GM12878 (cell line): ENCODE measurements at regions of chr20 and their contacts with region 1.

Region 1: GRCh38 chr20:2172305-2173175 is 70.9 kb downstream of the STK35 start:
- DNase-seq: peak; percentile 1
- ATAC-seq: peak; percentile 86
- H3K4me3 ChIP-seq: no peak overlapping the region
- H3K27ac ChIP-seq: no peak overlapping the region
- H3K4me1 ChIP-seq: no peaks in the 10 kb centered on the region
- H3K27me3 ChIP-seq: no peaks in the 10 kb centered on the region
- CTCF ChIP-seq: peak; percentile 88 to 93 (median 92)
- EP300 ChIP-seq: no peak
- POLR2A ChIP-seq: no peak
- RAD21 ChIP-seq: peak; percentile 93

Region 2: DNA sequence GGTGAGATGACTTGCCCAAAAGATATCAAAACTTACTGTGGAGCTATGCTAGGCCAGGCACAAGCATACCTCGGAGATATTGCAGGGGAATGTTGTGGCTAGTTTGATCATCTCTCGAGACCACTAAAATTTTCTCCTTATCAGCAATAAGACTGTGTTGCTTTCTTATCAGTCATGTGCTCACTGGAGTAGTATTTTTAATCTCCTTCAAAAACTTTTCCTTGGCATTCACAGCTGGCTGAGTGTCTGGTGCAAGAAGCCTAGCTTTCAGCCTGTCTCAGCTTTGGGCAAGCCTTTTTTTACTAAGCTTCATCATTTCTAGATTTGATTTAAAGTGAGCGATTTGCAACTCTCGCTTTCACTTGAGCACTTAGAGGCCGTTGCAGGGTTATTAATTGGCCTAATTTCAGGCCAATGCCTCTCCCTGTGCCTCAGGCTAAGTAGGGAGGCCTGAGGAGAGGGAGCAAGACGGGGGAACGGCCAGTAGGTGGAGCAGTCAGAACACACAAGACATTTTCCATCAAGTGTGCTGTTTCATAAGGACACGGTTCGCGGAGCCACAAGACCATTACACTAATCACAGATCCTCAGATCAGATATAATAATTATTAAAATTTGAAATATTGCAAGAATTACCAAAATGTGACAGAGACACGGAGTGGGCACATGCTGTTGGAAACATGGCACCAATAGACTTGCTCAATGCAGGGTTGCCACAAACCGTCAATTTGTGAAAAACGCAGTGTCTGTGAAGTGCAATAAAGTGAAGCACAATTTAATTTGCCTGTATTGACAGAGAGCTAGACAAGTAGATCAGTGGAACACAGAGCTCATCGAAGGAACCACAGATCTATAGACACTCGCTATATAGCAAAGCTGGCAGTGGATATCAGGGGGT is 408.2 kb before region 1 on chr20:
- CTCF ChIA-PET with region 1: interaction called, 12 read pairs
- POLR2A ChIA-PET with region 1: no interaction called
- RAD21 ChIA-PET with region 1: interaction called, 11 read pairs
- SMC1A ChIA-PET with region 1: interaction called, 4 read pairs
- in situ Hi-C with region 1: no loop called
- intact Hi-C with region 1: loop called (anchors 5 kb)
- DNase-seq: peak; percentile 57
- ATAC-seq: peak; percentile 100
- H3K4me3 ChIP-seq: no peak overlapping the region
- H3K27ac ChIP-seq: no peak overlapping the region
- H3K4me1 ChIP-seq: peaks cover 4% of the 10 kb centered on the region
- H3K27me3 ChIP-seq: peaks cover 0 to 2% of the 10 kb centered on the region in 2 experiments; a peak in 2 of 4 replicates
- CTCF ChIP-seq: peak; percentile 80 to 89 (median 81)
- EP300 ChIP-seq: no peak
- POLR2A ChIP-seq: no peak
- RAD21 ChIP-seq: peak; percentile 79

Region 3: DNA sequence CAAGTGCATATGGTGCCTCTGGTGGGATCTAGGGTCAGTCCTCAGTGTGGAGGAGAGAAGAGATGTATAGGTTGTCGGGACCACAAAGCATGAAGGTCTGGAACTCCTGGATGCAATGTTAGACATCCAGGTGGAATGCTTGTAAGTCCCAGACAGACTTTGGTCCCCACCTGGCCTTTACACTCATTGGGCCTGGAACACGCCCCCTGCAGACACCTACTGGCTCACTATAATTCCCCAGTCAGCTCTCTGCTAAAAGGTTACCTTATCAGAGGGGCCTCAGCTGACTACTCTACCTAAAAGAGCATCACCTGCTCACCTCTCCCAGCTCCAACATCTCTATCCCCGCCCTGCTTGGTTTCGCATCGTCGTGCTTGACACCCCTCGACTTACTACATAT is 319.1 kb before region 1 on chr20:
- CTCF ChIA-PET with region 1: no interaction called
- POLR2A ChIA-PET with region 1: interaction called, 10 read pairs
- RAD21 ChIA-PET with region 1: no interaction called
- SMC1A ChIA-PET with region 1: no interaction called
- in situ Hi-C with region 1: no loop called
- intact Hi-C with region 1: no loop called
- DNase-seq: no peak
- ATAC-seq: no peak
- H3K4me3 ChIP-seq: no peak overlapping the region
- H3K27ac ChIP-seq: no peak overlapping the region
- H3K4me1 ChIP-seq: peaks cover 14% of the 10 kb centered on the region
- H3K27me3 ChIP-seq: no peaks in the 10 kb centered on the region
- CTCF ChIP-seq: no peak
- EP300 ChIP-seq: no peak
- POLR2A ChIP-seq: no peak
- RAD21 ChIP-seq: no peak

Region 4: GRCh38 chr20:2005831-2006426 is 166.6 kb before region 1 on chr20:
- CTCF ChIA-PET with region 1: interaction called, 95 read pairs
- POLR2A ChIA-PET with region 1: no interaction called
- RAD21 ChIA-PET with region 1: interaction called, 33 read pairs
- SMC1A ChIA-PET with region 1: interaction called, 31 read pairs
- in situ Hi-C with region 1: loop called (anchors 5 kb)
- intact Hi-C with region 1: loop called (anchors 1 kb)
- DNase-seq: no peak
- ATAC-seq: peak; percentile 73
- H3K4me3 ChIP-seq: no peak overlapping the region
- H3K27ac ChIP-seq: no peak overlapping the region
- H3K4me1 ChIP-seq: no peaks in the 10 kb centered on the region
- H3K27me3 ChIP-seq: no peaks in the 10 kb centered on the region; a peak in 2 of 4 replicates
- CTCF ChIP-seq: 0 out of 6 replicates have a peak, but pooled peaks of 1 of the 3 experiments have one; percentile 1
- EP300 ChIP-seq: no peak
- POLR2A ChIP-seq: no peak
- RAD21 ChIP-seq: 0 out of 2 replicates have a peak, but pooled peaks have one; percentile 3

Region 5: GRCh38 chr20:2183381-2183780 is 10.8 kb after region 1 on chr20:
- CTCF ChIA-PET with region 1: interaction called, 17 read pairs
- POLR2A ChIA-PET with region 1: no interaction called
- RAD21 ChIA-PET with region 1: interaction called, 3 read pairs
- SMC1A ChIA-PET with region 1: interaction called, 4 read pairs
- in situ Hi-C with region 1: no loop called
- intact Hi-C with region 1: no loop called
- DNase-seq: no peak
- ATAC-seq: no peak
- H3K4me3 ChIP-seq: no peak overlapping the region
- H3K27ac ChIP-seq: no peak overlapping the region
- H3K4me1 ChIP-seq: no peaks in the 10 kb centered on the region
- H3K27me3 ChIP-seq: no peaks in the 10 kb centered on the region
- CTCF ChIP-seq: no peak
- EP300 ChIP-seq: no peak
- POLR2A ChIP-seq: no peak
- RAD21 ChIP-seq: no peak